CD8-positive, alpha-beta T cell (primary cell): ENCODE measurements at regions of chr11 and their contacts with region 1.

Region 1: GRCh38 chr11:45655347-45655756 is 10.1 kb downstream of the CHST1 start:
- DNase-seq: peak; percentile 26 to 69 (median 57)
- ATAC-seq: peak; percentile 58
- H3K4me3 ChIP-seq: no peak overlapping the region
- H3K4me3 Mint-ChIP-seq: no peak overlapping the region
- H3K27ac ChIP-seq: no peak overlapping the region
- H3K27ac Mint-ChIP-seq: no peak overlapping the region
- H3K4me1 ChIP-seq: peaks cover 6% of the 10 kb centered on the region
- H3K4me1 Mint-ChIP-seq: peaks cover 8% of the 10 kb centered on the region
- H3K27me3 ChIP-seq: peaks cover 0 to 7% of the 10 kb centered on the region in 2 experiments
- H3K27me3 Mint-ChIP-seq: peaks cover 31% of the 10 kb centered on the region
- CTCF ChIP-seq: peak; percentile 74

Region 2: DNA sequence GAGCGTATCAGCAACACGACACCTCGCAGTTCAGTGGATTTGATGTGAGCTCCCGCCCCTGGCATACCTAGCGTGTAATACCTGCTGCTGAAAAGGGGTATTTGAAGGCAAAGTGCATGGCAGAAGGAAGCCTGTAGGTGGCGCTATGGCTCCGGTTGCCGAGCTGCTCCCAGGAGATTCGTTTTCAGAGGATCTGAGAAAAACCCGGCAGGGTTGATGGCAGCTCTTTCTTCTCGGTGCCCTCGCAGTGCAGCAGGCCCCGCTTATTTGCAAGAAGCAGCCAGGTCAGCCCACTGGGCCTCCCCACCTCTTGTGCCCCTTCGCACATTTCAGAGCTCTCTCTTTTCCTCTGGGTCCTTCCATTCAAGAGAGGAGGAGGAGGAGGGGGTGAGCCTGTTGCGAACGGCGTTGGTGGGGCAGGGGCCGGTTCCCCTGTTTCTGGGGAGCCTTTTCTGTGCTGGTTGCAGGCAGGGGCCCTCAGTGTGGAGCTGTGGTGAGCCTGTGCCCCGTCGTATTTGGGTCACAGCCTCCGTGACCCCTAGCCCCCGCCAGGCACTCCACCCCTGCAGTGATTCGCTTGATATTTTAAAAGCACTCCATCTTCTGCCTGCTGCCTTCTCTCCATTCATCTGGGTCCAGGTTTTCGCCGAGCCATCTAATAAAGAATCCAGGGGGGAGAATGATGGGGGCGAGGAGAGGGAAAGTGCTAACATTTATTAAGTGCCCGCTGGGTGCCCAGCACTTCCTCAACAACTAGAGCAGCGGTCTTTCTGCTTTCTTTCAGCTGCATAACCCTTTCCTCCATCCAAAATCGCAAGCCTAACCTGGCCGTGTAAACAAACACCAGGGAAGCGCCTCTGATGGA is 283.9 kb before region 1 on chr11:
- CTCF ChIA-PET with region 1: interaction called, 18 read pairs
- POLR2A ChIA-PET with region 1: no interaction called
- intact Hi-C with region 1: loop called in 1 of 2 experiments (anchors 1 kb)
- DNase-seq: peak; percentile 34 to 74 (median 63)
- ATAC-seq: peak; percentile 52
- H3K4me3 ChIP-seq: no peak overlapping the region
- H3K4me3 Mint-ChIP-seq: peak overlapping the region; percentile 49
- H3K27ac ChIP-seq: no peak overlapping the region
- H3K27ac Mint-ChIP-seq: no peak overlapping the region
- H3K4me1 ChIP-seq: peaks cover 9% of the 10 kb centered on the region
- H3K4me1 Mint-ChIP-seq: peaks cover 22% of the 10 kb centered on the region
- H3K27me3 ChIP-seq: peaks cover 2 to 3% of the 10 kb centered on the region in 2 experiments
- H3K27me3 Mint-ChIP-seq: peaks cover 13% of the 10 kb centered on the region
- CTCF ChIP-seq: peak; percentile 75

Region 3: DNA sequence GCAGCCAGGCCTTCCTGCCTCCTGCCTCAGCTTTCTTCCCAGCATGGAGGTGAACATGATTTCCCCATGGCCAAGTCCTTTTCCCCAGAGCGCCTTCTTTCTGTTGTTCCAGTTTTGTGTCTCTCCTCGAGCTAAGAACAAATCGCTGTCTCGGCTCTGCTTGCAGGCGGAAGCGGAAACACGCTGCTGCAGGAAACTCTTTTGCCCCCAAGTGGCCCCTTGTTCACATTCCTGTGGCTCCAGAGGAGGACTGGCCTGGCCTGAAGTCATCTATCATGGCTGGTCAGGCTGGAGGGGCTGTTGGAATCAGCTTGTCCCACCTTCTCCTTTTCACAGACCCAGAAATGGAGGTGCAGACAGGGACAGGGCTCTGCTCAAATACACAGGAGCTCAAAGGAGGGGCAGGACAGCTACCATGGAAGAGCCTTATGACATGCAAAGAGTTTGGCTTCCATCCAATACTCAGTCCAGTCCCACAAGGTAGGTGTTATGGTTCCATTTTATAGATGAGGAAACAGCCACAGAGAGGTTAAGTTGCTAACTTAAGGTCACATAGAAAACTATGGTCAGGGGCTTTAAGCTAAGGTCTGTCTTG is 187.0 kb before region 1 on chr11:
- CTCF ChIA-PET with region 1: no interaction called
- POLR2A ChIA-PET with region 1: no interaction called
- intact Hi-C with region 1: no loop called
- DNase-seq: no peak
- ATAC-seq: no peak
- H3K4me3 ChIP-seq: no peak overlapping the region
- H3K4me3 Mint-ChIP-seq: no peak overlapping the region
- H3K27ac ChIP-seq: no peak overlapping the region
- H3K27ac Mint-ChIP-seq: no peak overlapping the region
- H3K4me1 ChIP-seq: no peaks in the 10 kb centered on the region
- H3K4me1 Mint-ChIP-seq: no peaks in the 10 kb centered on the region
- H3K27me3 ChIP-seq: no peaks in the 10 kb centered on the region
- H3K27me3 Mint-ChIP-seq: peaks cover under 1% of the 10 kb centered on the region
- CTCF ChIP-seq: no peak

Region 4: GRCh38 chr11:45638051-45638450 is 17.3 kb before region 1 on chr11:
- CTCF ChIA-PET with region 1: interaction called, 11 read pairs
- POLR2A ChIA-PET with region 1: no interaction called
- intact Hi-C with region 1: no loop called
- DNase-seq: no peak
- ATAC-seq: no peak
- H3K4me3 ChIP-seq: no peak overlapping the region
- H3K4me3 Mint-ChIP-seq: no peak overlapping the region
- H3K27ac ChIP-seq: no peak overlapping the region
- H3K27ac Mint-ChIP-seq: no peak overlapping the region
- H3K4me1 ChIP-seq: no peaks in the 10 kb centered on the region
- H3K4me1 Mint-ChIP-seq: no peaks in the 10 kb centered on the region
- H3K27me3 ChIP-seq: no peaks in the 10 kb centered on the region
- H3K27me3 Mint-ChIP-seq: peaks cover 34% of the 10 kb centered on the region
- CTCF ChIP-seq: no peak